GM10248 (cell line): ENCODE measurements at regions of chr15 and their contacts with region 1.

Region 1: DNA sequence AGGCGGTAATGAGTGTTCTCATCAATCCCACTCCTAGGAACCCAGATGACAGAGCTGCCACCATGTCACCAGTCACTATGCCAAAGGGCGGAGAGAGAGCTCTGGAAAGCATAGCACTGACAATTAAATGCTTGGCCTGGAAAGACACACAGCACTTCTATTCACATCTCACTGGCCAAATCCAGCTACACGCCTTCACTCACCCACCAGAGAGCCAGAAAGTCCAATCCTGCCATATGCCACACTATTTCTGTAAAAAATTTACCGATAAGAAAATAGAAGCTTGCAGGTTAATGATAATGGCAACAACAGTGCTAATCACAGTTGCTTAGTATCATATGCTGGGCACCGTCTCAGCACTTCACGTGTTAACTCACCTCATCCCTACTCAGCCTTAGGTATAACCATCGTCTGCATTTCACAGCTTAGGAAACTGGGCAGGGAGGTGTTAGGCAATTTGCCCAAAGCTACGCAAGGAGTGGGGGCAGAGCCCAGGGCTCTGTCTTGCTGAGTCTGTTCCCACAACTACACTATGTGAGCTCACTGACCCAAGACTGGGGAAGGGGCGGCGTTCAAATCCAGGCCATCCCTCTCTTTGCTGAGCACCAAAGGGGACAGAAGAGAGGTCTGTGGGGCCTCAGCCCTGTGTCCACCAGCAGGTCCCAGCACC is 16.5 kb downstream of the KLHL25 start:
- DNase-seq: no peak
- CTCF ChIP-seq: no peak

Region 2: DNA sequence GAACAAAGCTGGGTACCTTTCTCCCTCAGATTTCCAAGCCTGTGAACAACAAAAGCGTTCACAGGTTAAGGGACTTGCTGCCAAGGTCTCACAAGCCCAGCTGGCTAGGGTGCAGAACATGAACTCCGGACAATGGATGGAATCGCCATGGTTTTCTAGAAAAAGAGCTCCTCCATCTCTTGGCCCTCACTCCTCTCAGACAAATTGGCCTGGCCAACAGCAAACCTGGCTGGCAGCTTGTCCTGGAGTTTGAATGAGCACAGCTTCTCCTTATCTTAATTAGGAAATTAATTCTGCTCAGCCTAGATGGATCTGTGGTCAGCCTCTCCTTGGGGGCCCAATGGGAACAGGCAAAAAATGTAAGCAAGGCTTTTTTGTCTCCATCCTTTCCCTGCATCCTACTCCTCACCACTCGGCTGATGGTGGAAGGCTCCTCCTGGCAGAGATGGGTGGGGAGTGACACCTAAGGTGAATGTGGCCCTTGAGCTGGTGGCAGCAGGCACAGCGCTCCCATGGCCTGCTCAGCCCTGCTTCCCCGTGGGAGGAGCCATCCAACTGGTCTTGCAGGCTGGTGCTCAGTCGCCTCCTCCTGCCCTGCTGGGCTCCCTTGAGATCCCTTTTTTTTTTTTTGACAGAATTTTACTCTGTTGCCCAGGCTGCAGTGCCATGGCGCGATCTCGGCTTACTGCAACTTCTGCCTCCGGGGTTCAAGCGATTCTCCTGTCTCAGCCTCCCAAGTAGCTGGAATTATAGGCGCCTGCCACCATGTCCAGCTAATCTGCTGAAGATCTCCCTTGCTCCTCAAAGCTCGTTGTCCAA is 10.7 kb after region 1 on chr15:
- CTCF ChIA-PET with region 1: interaction called, 12 read pairs
- POLR2A ChIA-PET with region 1: interaction called, 3 read pairs
- DNase-seq: no peak
- CTCF ChIP-seq: no peak